Activated CD8-positive, alpha-beta memory T cell treated with anti-CD3 and anti-CD28 coated beads, Interleukin-2, amount 10 ng/mL, durations not matched to agents 7 days and 5 days (primary cell): ENCODE measurements at regions of chr7 and their contacts with region 1.

Region 1: DNA sequence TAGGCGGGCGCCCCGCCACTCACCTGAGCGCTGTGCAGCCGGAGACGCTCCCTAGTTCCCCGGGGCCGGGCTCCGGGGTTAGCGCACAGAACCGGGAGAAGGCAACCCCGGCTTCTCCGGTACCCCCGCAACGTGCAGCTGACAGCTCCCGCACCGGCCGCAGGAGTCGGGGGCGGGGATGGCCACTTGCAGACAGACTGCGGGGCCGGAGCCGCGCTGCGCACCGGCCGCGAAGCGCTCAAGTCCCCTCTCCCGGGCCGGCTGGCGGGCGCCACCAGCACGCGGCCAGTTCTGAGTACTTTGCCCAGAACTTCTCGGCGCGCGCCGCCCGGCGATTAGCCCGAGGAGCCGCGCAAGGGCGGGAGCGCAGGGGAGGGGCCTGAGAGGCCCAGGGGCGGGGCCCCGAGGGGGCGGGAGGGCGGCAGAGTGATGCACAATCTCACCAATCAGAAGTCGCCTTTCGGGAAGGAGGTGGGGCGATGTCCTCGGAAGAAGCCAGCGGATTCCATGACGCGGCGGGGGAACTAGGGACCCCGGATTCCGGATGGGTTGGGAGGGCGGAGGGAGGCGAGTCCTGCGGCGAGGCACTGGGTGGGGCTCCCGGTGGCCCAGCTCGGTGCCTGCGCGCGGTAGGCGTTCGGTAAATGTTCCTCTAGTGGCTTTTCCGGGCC is at the start of gene OSBPL3:
- DNase-seq: peak; percentile 96
- ATAC-seq: peak; percentile 83
- H3K4me3 Mint-ChIP-seq: peak within 1 kb of the TSS; percentile 98
- H3K27ac Mint-ChIP-seq: peak within 1 kb of the TSS; percentile 91
- H3K4me1 Mint-ChIP-seq: peaks cover 49% of the 10 kb centered on the region
- H3K27me3 Mint-ChIP-seq: peaks cover 6% of the 10 kb centered on the region
- total RNA-seq, gene OSBPL3: 98.3 to 133 TPM

Region 2: GRCh38 chr7:24812310-24812945 is 167.6 kb before region 1 on chr7:
- CTCF ChIA-PET with region 1: interaction called, 49 read pairs
- DNase-seq: peak; percentile 61
- ATAC-seq: peak; percentile 68
- H3K4me3 Mint-ChIP-seq: no peak overlapping the region
- H3K27ac Mint-ChIP-seq: peak overlapping the region; percentile 18
- H3K4me1 Mint-ChIP-seq: no peaks in the 10 kb centered on the region
- H3K27me3 Mint-ChIP-seq: no peaks in the 10 kb centered on the region

Region 3: GRCh38 chr7:24896031-24896501 is 83.9 kb before region 1 on chr7:
- CTCF ChIA-PET with region 1: interaction called, 14 read pairs
- DNase-seq: peak; percentile 70
- ATAC-seq: peak; percentile 52
- H3K4me3 Mint-ChIP-seq: no peak overlapping the region
- H3K27ac Mint-ChIP-seq: peak overlapping the region; percentile 77
- H3K4me1 Mint-ChIP-seq: peaks cover 61% of the 10 kb centered on the region
- H3K27me3 Mint-ChIP-seq: no peaks in the 10 kb centered on the region

Region 4: GRCh38 chr7:24926623-24927524 is 53.1 kb before region 1 on chr7:
- CTCF ChIA-PET with region 1: interaction called, 26 read pairs
- DNase-seq: no peak
- ATAC-seq: no peak
- H3K4me3 Mint-ChIP-seq: no peak overlapping the region
- H3K27ac Mint-ChIP-seq: peak overlapping the region; percentile 11
- H3K4me1 Mint-ChIP-seq: peaks cover 58% of the 10 kb centered on the region
- H3K27me3 Mint-ChIP-seq: no peaks in the 10 kb centered on the region

Region 5: DNA sequence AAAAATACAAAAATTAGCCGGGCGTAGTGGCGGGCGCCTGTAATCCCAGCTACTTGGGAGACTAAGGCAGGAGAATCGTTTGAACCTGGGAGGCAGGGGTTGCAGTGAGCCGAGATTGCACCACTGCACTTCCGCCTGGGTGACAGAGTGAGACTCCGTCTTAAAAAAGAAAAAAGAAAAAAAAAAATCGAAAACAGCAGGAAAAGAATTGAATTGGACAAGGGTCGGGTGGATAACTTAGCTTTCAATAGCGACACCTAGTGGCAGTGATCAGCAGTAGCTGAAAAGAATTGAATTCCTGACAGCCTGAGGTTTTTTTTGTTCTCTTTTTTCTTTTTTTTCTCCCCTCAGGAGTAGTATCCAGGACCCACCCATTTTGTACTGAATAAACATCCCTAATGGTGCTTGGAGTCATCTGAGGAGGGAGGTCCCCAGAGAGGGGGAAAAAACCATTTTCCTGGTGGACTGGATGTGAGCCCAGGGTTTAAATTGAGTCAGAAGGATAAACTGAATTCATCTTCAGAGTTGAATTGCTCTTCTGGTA is 90.0 kb after region 1 on chr7:
- CTCF ChIA-PET with region 1: interaction called, 21 read pairs
- DNase-seq: peak; percentile 66
- ATAC-seq: peak; percentile 79
- H3K4me3 Mint-ChIP-seq: no peak overlapping the region
- H3K27ac Mint-ChIP-seq: no peak overlapping the region
- H3K4me1 Mint-ChIP-seq: peaks cover 16% of the 10 kb centered on the region
- H3K27me3 Mint-ChIP-seq: no peaks in the 10 kb centered on the region